Ascending aorta (tissue), 2 donors: ENCODE measurements at regions of chr6 and their contacts with region 1.

Region 1: DNA sequence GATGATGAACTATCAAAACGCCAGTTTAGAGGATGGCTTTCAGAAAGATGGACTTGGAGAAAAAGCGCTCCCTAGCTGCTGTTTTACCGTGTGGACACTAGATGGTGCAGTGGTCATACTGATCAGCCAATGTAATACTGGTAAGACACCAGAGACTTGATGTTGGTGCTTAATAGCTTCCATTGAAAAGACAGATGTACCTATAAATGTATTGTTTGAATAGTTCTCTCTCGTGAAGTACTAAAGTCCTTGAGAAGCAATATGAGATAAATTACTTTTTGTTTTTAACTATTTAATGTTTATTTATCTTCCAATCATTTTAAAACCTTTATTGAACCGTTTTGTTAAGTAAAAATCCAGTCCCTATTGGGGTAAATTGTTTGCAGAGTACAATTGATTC is 63.9 kb upstream of the FUCA2 start:
- DNase-seq: peak in 1 of 2 donors; percentile 72
- H3K4me3 ChIP-seq: no peak overlapping the region
- H3K27ac ChIP-seq: no peak overlapping the region
- H3K4me1 ChIP-seq: peaks cover 3 to 5% of the 10 kb centered on the region in 2 donors
- H3K27me3 ChIP-seq: no peaks in the 10 kb centered on the region
- CTCF ChIP-seq: peak; percentile 81 to 90 (median 90)

Region 2: DNA sequence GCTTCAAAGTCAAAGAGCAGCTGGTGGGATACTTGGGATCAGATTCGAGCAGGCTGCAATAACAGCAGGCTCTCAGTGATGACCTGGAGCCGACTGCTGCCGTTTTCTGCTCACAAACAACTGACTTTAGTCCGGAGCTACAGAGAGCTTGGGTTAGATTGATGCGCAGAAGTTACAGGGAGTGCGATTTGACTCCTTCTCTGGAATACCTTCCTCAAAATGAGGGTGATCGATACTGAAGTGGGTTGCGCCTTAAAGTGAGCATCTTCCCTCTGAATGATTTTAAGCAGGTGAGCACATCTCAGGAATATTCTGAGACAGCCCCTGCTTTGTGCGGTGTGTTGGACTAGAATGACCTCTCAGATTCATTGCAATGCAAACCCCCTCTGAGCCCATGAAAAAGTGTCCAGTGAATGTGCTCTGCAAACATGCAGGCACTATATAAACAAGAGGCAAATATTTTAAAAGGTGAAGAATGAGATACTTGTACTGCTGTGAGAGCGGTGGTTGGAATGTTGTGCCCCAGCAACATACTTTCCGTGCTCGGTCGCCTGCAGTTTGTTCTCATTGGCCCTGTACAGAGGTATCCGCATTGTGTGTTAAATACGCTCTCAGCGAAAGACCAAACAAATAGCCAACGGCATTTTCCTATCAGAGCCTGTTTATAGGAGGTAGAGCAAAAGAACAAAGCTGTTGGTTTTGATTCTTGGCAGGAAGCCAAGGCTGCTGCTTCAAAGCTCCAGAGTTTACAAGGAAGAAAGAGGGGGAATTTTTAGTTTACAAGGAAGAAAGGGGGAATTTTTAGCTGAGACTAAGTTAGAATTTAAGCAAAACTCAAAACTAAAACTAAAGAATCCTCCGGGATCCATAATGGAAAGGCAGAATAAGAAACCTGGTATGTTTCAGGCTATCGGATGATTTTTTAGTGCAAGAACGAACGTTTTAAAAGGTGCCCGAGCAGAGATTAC is 170.0 kb after region 1 on chr6:
- intact Hi-C with region 1: loop called (anchors 5 kb)
- DNase-seq: peak in 1 of 2 donors; percentile 70
- H3K4me3 ChIP-seq: peak overlapping the region; percentile 41 to 44
- H3K27ac ChIP-seq: peak overlapping the region; percentile 80 to 86
- H3K4me1 ChIP-seq: peaks cover 9 to 39% of the 10 kb centered on the region in 2 donors
- H3K27me3 ChIP-seq: no peaks in the 10 kb centered on the region
- CTCF ChIP-seq: no peak

Region 3: GRCh38 chr6:144013486-144013909 is 438.1 kb after region 1 on chr6:
- intact Hi-C with region 1: loop called (anchors 1 kb)
- DNase-seq: peak in 1 of 2 donors; percentile 87
- H3K4me3 ChIP-seq: no peak overlapping the region
- H3K27ac ChIP-seq: no peak overlapping the region
- H3K4me1 ChIP-seq: no peaks in the 10 kb centered on the region
- H3K27me3 ChIP-seq: no peaks in the 10 kb centered on the region
- CTCF ChIP-seq: peak; percentile 82 to 92 (median 89)